Activated CD8-positive, alpha-beta T cell treated with anti-CD3 and anti-CD28 coated beads, Interleukin-2, amount 10 ng/mL, durations not matched to agents 7 days and 5 days (primary cell): ENCODE measurements at regions of chr15 and their contacts with region 1.

Region 1: DNA sequence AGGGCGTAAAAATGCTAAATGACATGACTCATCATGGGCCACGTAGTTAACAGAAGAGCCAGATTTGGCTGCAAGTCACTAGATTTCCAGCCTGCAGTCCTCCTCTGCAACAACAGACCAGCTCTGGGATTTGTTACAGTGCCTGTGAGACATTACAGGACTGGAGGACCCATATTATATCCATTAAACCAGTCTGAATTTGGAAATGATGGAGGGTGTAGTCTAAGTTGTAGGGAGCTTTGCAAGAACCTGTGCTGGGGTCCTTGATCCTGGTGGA is 10.8 kb downstream of the ZNF774 start:
- DNase-seq: no peak
- ATAC-seq: no peak
- H3K4me3 Mint-ChIP-seq: no peak overlapping the region
- H3K27ac Mint-ChIP-seq: no peak overlapping the region
- H3K4me1 Mint-ChIP-seq: peaks cover 42% of the 10 kb centered on the region
- H3K27me3 Mint-ChIP-seq: no peaks in the 10 kb centered on the region

Region 2: DNA sequence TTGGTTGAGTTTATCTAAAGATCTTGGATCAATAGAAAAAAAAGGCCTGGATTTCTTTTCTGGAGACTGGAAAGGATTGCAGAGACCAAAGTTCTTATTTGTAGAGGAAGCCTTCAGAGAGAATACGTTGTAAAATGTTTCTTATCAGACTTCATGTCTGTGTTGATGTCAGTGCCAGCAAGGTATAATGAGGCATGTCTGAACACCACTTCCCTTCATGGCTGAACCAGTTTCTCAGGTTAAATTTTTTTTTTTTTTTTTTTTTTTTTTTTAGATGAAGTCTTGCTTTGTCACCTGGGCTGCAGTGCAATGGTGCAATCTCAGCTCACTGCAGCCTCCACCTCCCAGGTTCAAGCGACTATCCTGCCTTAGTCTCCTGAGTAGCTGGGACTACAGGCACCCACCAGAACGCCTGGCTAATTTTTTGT is 28.6 kb before region 1 on chr15:
- CTCF ChIA-PET with region 1: no interaction called
- POLR2A ChIA-PET with region 1: no interaction called
- DNase-seq: no peak
- ATAC-seq: no peak
- H3K4me3 Mint-ChIP-seq: no peak overlapping the region
- H3K27ac Mint-ChIP-seq: no peak overlapping the region
- H3K4me1 Mint-ChIP-seq: peaks cover 10% of the 10 kb centered on the region
- H3K27me3 Mint-ChIP-seq: no peaks in the 10 kb centered on the region

Region 3: GRCh38 chr15:90376789-90377188 is 13.9 kb after region 1 on chr15:
- CTCF ChIA-PET with region 1: interaction called, 39 read pairs
- POLR2A ChIA-PET with region 1: interaction called, 15 read pairs
- DNase-seq: peak; percentile 89
- ATAC-seq: peak; percentile 96
- H3K4me3 Mint-ChIP-seq: peak overlapping the region; percentile 62
- H3K27ac Mint-ChIP-seq: peak overlapping the region; percentile 92
- H3K4me1 Mint-ChIP-seq: peaks cover 54% of the 10 kb centered on the region
- H3K27me3 Mint-ChIP-seq: no peaks in the 10 kb centered on the region

Region 4: GRCh38 chr15:90387537-90388461 is 24.9 kb after region 1 on chr15 and contains the start of gene IQGAP1:
- CTCF ChIA-PET with region 1: interaction called, 25 read pairs
- POLR2A ChIA-PET with region 1: interaction called, 34 read pairs
- DNase-seq: peak; percentile 99
- ATAC-seq: peak; percentile 95
- H3K4me3 Mint-ChIP-seq: peak within 1 kb of the TSS; percentile 87
- H3K27ac Mint-ChIP-seq: peak within 1 kb of the TSS; percentile 98
- H3K4me1 Mint-ChIP-seq: peaks cover 46% of the 10 kb centered on the region
- H3K27me3 Mint-ChIP-seq: no peaks in the 10 kb centered on the region
- total RNA-seq, gene IQGAP1: 249 to 257 TPM

Region 5: DNA sequence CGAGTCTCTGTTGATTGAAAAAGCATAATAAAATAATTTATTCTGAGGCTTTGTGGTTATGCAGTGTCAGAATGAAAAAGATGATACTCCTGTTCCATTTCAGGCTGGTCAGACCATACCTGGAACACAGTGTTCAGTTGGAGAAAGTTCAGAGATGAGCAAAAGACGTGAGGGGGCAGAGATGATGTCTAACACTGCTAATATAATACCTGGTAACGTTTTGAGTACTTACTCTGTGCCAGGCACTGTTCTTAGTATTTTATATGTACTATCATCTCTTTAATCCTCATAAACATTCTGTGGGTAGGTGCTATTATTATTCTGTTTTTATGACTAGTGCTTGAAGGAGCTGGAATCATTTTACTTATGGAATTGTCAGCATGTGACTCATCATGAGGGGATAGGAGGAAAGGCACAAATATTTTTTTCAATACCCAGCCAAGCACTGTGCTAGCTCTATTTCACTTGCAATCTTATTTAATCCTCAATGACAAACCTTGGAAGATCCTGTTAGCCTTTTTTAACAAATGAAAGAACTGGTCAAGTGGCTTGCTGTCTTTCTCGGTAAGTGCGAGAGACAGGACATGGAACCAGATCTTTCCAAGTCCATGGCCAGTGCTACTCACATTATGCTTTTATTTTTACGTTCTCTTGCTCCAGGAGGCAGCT is 57.0 kb after region 1 on chr15:
- CTCF ChIA-PET with region 1: interaction called, 22 read pairs
- POLR2A ChIA-PET with region 1: interaction called, 4 read pairs
- DNase-seq: no peak
- ATAC-seq: peak; percentile 85
- H3K4me3 Mint-ChIP-seq: no peak overlapping the region
- H3K27ac Mint-ChIP-seq: peak overlapping the region; percentile 39
- H3K4me1 Mint-ChIP-seq: peaks cover 55% of the 10 kb centered on the region
- H3K27me3 Mint-ChIP-seq: no peaks in the 10 kb centered on the region

Region 6: GRCh38 chr15:90442423-90442822 is 79.5 kb after region 1 on chr15:
- CTCF ChIA-PET with region 1: interaction called, 27 read pairs
- POLR2A ChIA-PET with region 1: no interaction called
- DNase-seq: no peak
- ATAC-seq: no peak
- H3K4me3 Mint-ChIP-seq: no peak overlapping the region
- H3K27ac Mint-ChIP-seq: no peak overlapping the region
- H3K4me1 Mint-ChIP-seq: no peaks in the 10 kb centered on the region
- H3K27me3 Mint-ChIP-seq: no peaks in the 10 kb centered on the region

Region 7: DNA sequence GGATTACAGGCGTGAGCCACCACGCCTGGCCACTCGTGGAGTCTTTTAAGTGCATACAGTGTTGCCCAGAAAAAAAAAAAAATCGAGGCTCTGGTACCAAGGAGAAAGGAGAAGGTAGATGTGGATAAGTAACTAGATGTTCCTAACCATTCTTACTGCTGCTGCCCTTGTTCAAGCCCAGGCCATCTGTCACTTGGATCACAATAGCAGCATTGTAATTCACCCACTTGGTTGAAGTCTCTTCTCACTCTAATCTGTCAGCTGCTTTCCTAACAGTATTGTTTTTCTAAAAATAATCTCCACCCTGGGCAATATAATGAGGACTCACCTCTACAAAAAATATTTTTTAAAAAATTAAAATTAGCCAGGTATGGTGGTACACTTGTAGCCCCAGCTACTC is 108.9 kb after region 1 on chr15:
- CTCF ChIA-PET with region 1: interaction called, 17 read pairs
- POLR2A ChIA-PET with region 1: no interaction called
- DNase-seq: no peak
- ATAC-seq: no peak
- H3K4me3 Mint-ChIP-seq: no peak overlapping the region
- H3K27ac Mint-ChIP-seq: no peak overlapping the region
- H3K4me1 Mint-ChIP-seq: peaks cover 24% of the 10 kb centered on the region
- H3K27me3 Mint-ChIP-seq: no peaks in the 10 kb centered on the region

Region 8: GRCh38 chr15:90701880-90702630 is 339.2 kb after region 1 on chr15:
- CTCF ChIA-PET with region 1: no interaction called
- POLR2A ChIA-PET with region 1: no interaction called
- DNase-seq: no peak
- ATAC-seq: no peak
- H3K4me3 Mint-ChIP-seq: no peak overlapping the region
- H3K27ac Mint-ChIP-seq: no peak overlapping the region
- H3K4me1 Mint-ChIP-seq: peaks cover 10% of the 10 kb centered on the region
- H3K27me3 Mint-ChIP-seq: no peaks in the 10 kb centered on the region